ENCODE measurements at regions of chr1 and their contacts with region 1.

Region 1: GRCh38 chr1:25099343-25099951 is 132.9 kb downstream of the SYF2 start:
- DNase-seq: peak; percentile 80
- H3K4me3 ChIP-seq: no peak overlapping the region
- H3K27ac ChIP-seq: peak overlapping the region in 1 of 2 experiments; percentile 92; a peak in 2 of 4 replicates
- H3K4me1 ChIP-seq: peaks cover 0 to 35% of the 10 kb centered on the region in 2 experiments; a peak in 2 of 4 replicates
- H3K27me3 ChIP-seq: peaks cover 17% of the 10 kb centered on the region; the same call in 1 of the 2 replicates
- CTCF ChIP-seq: no peak
- EP300 ChIP-seq: peak in 1 of 2 experiments; percentile 65; a peak in 1 of 4 replicates
- RAD21 ChIP-seq: no peak

Region 2: DNA sequence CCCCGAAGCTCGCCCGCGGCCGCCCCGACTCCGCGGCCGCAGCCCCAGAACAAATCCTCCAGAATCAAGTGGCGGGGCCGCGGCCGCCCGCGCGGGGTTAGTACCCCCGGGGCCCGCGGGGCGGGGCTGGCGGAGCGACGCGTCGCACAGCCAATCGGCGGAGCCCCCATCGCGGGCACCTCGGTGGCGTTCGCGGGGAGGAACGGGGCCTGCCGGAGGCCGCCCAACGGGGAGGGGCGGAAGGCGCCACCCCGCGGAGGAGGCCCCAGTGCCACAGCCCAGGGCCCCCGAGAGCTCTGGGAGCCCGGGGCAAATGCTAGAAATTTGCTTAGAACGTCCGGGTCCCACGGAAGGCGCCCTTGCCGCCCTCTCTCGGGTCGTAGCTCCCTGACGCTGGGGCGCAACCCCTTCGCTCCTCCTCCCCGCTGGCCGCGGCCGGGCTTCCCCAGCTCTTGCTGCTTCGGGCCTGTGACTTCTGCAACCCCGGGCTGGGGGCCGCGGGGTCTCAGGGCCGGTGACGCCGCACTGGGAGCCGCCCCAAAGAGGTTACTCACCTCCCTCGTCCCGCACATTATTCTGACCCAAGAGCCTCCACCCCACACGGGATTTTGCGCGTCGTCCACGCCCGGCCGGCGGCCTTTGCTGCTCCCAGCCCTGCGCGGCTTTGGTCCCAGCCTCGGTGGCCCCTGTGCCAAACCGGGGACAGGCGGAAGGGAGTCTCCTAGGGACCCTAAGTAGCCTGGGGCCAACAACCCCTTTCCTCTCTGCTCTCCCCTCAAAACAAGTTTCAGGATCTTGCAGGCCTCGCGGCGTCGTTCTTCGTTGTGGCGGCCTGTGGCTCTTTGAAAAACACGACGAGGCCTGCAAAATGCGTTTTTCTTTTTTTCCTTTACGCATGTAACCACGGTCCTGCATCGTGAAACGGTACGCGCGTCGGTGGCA is 169.0 kb before region 1 on chr1 and contains the start of gene RUNX3:
- CTCF ChIA-PET with region 1: interaction called, 85 read pairs
- POLR2A ChIA-PET with region 1: no interaction called
- DNase-seq: peak; percentile 80
- H3K4me3 ChIP-seq: no peak within 1 kb of the TSS
- H3K27ac ChIP-seq: no peak within 1 kb of the TSS
- H3K4me1 ChIP-seq: peaks cover 0 to 8% of the 10 kb centered on the region in 2 experiments; a peak in 1 of 4 replicates
- H3K27me3 ChIP-seq: peaks cover 87% of the 10 kb centered on the region
- CTCF ChIP-seq: no peak
- EP300 ChIP-seq: no peak
- RAD21 ChIP-seq: no peak
- polyA plus RNA-seq, gene RUNX3: not detected in 2 replicates

Region 3: DNA sequence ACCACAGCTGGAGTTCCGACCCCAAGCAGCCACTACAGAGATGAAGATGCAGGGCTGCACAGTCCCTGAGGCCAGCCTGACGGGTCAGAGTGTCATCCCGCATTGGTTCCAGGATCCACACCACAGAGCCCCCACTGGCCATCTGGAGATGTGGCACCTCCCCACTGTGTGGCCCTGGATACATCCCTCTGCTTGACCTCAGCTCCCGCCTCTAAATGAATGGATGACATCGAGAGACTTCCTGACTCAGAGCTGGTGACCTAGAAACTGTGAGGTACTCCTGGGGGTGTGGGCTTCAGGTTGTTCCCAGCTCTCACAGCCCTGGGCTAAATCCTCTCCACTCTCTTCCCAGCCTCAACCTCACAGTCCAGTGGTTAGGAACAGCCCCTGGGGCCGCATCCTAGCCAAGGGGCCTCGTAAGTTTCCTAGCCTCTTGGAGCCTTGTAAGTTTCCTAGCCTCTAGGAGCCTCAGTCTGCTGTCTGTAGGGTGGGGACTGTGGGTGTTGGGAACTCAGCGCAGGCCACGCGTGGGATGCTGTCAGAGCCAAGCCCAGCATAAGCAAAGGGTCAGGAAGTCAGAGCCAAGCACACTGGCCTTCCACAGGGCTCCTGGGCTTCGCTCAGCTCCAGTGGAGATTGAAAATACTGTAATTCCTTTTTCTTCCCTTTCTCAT is 81.9 kb before region 1 on chr1:
- CTCF ChIA-PET with region 1: no interaction called
- POLR2A ChIA-PET with region 1: no interaction called
- DNase-seq: no peak
- H3K4me3 ChIP-seq: no peak overlapping the region
- H3K27ac ChIP-seq: no peak overlapping the region
- H3K4me1 ChIP-seq: peaks cover 7 to 9% of the 10 kb centered on the region in 2 experiments; a peak in 3 of 4 replicates
- H3K27me3 ChIP-seq: no peaks in the 10 kb centered on the region
- CTCF ChIP-seq: no peak
- EP300 ChIP-seq: no peak
- RAD21 ChIP-seq: no peak

Region 4: DNA sequence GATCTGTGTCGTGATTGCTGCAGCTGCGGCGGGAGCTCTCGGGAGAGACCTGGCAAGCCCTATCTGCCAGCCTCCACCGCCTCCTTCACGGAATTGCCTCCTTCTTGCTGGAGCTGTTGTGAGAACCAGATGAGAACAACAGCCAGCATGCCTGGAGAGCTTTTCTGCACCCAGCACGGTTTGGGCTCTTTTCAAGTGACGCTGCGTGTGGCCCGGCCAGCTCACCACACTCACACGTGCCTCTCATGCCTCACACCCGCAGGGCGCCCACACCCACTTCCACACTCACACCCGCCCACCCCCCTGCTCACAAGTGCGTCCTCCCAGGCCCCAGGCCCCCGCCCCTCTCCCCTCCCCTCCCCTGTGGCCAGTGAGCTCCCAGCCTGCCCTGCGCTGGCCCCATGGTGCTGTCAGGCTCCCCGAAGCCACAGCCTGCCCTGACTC is 33.6 kb before region 1 on chr1:
- CTCF ChIA-PET with region 1: interaction called, 18 read pairs
- POLR2A ChIA-PET with region 1: interaction called, 3 read pairs
- DNase-seq: peak; percentile 74
- H3K4me3 ChIP-seq: no peak overlapping the region
- H3K27ac ChIP-seq: peak overlapping the region in 1 of 2 experiments; percentile 74; a peak in 2 of 4 replicates
- H3K4me1 ChIP-seq: peaks cover 0 to 36% of the 10 kb centered on the region in 2 experiments; a peak in 1 of 4 replicates
- H3K27me3 ChIP-seq: peaks cover 4% of the 10 kb centered on the region; the same call in 1 of the 2 replicates
- CTCF ChIP-seq: no peak
- EP300 ChIP-seq: no peak
- RAD21 ChIP-seq: no peak

Region 5: DNA sequence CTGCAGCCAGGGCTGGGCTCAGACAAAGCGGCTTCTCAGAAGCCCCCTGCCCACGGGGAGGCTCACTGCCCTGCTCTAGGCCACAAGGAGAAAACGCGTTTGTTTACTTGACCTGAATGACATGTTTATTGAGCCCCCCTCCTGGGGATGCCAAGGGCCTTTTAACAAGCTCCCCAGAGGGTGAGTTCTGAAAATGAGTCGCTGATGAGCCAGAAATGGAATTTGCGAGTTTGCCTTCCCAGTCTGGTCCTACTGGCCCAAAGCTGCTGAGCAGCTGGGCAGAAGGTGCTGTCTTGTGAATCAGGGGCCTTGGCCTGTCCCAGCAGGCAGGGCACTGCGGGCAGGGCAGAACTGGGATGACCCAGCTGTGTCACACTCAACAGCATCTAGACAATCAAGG is 12.3 kb after region 1 on chr1:
- CTCF ChIA-PET with region 1: interaction called, 13 read pairs
- POLR2A ChIA-PET with region 1: no interaction called
- DNase-seq: no peak
- H3K4me3 ChIP-seq: no peak overlapping the region
- H3K27ac ChIP-seq: no peak overlapping the region
- H3K4me1 ChIP-seq: no peaks in the 10 kb centered on the region; a peak in 1 of 4 replicates
- H3K27me3 ChIP-seq: 0 out of 2 replicates have a peak, but pooled peaks cover 3% of the 10 kb centered on the region
- CTCF ChIP-seq: no peak
- EP300 ChIP-seq: no peak
- RAD21 ChIP-seq: no peak

Region 6: DNA sequence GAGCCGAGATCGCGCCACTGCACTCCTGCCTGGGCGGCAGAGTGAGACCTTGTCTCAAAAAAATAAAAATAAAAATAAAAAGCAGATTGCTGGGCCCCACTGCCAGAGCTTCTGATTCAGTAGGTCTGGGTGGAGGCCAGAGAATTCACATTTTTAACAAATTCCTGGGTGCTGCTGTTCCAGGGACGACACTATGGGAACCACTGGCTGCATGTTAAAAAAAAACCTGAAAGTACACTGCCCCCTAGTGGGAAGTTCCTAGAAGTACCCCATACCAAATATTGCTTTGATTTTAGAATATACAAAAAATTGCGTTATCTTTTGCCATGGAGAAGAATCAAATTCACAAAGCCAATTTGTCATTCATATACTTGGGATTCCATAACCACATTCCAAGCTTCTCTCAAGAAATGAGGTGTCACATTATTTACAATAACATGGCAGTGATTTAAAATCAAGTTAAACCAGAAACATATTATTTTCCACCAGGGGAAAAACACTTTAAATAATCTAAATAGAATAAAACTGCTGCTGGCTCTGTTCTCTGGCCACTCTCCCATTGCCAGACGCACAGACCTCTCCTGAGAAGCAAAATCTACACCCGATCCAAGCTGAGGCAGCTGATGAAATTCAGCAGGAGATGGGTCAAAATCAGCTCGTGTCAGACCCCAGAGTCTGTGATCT is 105.5 kb after region 1 on chr1:
- CTCF ChIA-PET with region 1: interaction called, 39 read pairs
- POLR2A ChIA-PET with region 1: no interaction called
- DNase-seq: peak; percentile 72
- H3K4me3 ChIP-seq: peak overlapping the region in 1 of 2 experiments; percentile 32; a peak in 1 of 4 replicates
- H3K27ac ChIP-seq: no peak overlapping the region
- H3K4me1 ChIP-seq: no peaks in the 10 kb centered on the region; a peak in 1 of 4 replicates
- H3K27me3 ChIP-seq: no peaks in the 10 kb centered on the region; the same call in 1 of the 2 replicates
- CTCF ChIP-seq: peak; percentile 85
- EP300 ChIP-seq: no peak
- RAD21 ChIP-seq: peak; percentile 75

Measured in SK-N-SH (cell line).